ENCODE measurements at regions of chr17 and their contacts with region 1.

Region 1: GRCh38 chr17:28698253-28698941 is 13.3 kb downstream of the PROCA1 start:
- DNase-seq: peak; percentile 100
- ATAC-seq: peak; percentile 95
- H3K4me3 ChIP-seq: peak overlapping the region in 1 of 3 experiments; percentile 20; a peak in 1 of 6 replicates
- H3K27ac ChIP-seq: peak overlapping the region; percentile 91
- H3K4me1 ChIP-seq: peaks cover 72% of the 10 kb centered on the region
- H3K27me3 ChIP-seq: no peaks in the 10 kb centered on the region
- CTCF ChIP-seq: peak; percentile 46
- EP300 ChIP-seq: peak; percentile 86 to 87; a peak in 3 of 4 replicates
- POLR2A ChIP-seq: peak; percentile 96 to 99
- RAD21 ChIP-seq: peak; percentile 46

Region 2: DNA sequence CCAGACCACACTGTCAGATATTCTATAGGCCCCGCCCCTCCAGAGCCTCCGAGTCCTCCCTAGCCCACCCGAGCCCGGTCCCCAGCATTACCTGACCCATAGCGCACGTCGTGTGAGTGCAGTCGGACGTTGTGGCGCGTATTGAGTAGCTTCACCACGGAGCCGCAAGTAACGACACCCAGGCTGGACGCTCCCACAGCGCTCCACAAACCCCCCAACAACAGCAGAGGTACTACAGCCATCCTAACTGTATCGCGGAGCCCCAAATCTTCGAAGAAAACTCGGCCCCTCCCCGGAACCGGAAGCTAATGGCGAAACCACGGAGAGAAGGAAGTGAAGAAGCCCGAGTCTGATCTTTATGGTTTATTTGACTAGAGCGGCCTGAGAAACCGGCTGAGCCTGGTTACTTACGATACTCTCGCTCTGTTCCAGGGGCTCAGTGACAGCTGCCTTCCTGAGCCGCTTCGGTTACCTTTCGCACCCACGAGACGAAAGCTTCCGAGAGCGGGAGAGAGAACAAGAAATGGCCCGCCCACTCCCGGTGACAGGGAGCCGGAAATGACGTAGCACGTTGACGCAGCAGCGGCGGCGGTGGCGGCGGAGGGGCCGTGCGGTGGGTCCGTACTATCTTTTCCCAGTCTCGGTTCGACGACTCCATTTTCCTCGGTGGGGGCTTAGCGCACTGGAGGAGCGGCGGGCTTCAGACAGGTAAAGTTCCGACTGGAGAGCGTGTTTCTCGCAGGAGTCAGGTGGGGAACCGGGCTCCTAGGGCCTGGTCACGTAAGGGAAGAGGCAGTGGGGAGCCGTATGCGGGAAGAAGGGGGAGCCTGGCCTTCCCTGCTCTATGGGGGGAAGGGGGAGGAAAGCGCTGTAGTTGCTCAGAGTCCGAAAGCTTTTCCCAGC is 36.5 kb before region 1 on chr17 and contains the starts of genes SDF2 and SUPT6H:
- CTCF ChIA-PET with region 1: no interaction called
- POLR2A ChIA-PET with region 1: interaction called, 16 read pairs
- in situ Hi-C with region 1: no loop called
- intact Hi-C with region 1: loop called (anchors 5 kb)
- DNase-seq: peak; percentile 81
- ATAC-seq: peak; percentile 92
- H3K4me3 ChIP-seq: peak within 1 kb of the TSS; percentile 73 to 91 (median 88)
- H3K27ac ChIP-seq: peak within 1 kb of the TSS; percentile 91
- H3K4me1 ChIP-seq: peaks cover 52% of the 10 kb centered on the region
- H3K27me3 ChIP-seq: no peaks in the 10 kb centered on the region; a peak in 2 of 5 replicates
- CTCF ChIP-seq: no peak
- EP300 ChIP-seq: no peak
- POLR2A ChIP-seq: peak; percentile 73 to 81
- RAD21 ChIP-seq: no peak
- total RNA-seq, gene SDF2: 39.1 and 58.2 TPM in 2 replicates
- total RNA-seq, gene SUPT6H: 39.9 TPM in 2 replicates

Measured in HepG2 (cell line).